AG04449 (cell line): ENCODE measurements at regions of chr6 and their contacts with region 1.

Region 1: DNA sequence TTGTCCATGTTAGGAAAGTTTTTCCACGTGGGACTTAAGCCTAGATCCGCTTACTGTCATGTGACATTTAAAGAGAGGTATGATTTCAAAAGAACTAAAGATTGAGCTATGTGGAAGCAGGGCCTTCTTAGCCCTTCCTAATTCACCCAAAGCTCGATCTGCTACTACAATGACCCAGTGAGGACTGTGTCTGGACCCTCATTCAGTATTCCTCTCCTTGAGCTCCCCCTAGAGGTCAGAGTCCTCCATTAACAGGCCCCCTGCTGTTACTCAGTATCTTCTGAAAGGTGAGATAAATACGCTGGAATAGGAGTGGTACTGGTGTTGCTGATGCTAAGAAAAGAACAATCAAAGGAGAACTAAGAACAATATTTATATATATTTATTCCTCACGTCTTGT is 414.0 kb downstream of the GJA1 start:
- DNase-seq: no peak
- H3K4me3 ChIP-seq: no peak overlapping the region
- CTCF ChIP-seq: peak; percentile 77

Region 2: DNA sequence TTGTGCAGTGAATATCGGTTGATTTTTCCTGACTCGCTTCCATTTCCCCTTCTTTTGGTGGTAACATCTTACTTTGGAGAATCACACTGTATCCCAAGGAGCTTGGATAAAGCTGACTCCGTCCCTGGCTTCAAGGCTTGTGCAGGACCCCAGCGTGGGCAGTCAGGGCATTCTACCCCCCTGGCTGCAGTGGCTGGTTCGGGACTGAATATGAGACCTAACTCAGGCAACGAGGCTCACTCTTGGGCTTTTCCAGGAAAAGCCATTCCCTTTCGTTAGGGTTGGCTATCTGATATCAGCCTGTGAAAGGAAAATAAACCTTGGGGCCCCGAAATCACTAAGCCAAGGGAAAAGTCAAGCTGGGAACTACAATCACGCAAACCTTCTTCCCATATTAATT is 444.2 kb before region 1 on chr6:
- CTCF ChIA-PET with region 1: no interaction called
- POLR2A ChIA-PET with region 1: no interaction called
- DNase-seq: no peak
- H3K4me3 ChIP-seq: no peak overlapping the region
- CTCF ChIP-seq: no peak

Region 3: DNA sequence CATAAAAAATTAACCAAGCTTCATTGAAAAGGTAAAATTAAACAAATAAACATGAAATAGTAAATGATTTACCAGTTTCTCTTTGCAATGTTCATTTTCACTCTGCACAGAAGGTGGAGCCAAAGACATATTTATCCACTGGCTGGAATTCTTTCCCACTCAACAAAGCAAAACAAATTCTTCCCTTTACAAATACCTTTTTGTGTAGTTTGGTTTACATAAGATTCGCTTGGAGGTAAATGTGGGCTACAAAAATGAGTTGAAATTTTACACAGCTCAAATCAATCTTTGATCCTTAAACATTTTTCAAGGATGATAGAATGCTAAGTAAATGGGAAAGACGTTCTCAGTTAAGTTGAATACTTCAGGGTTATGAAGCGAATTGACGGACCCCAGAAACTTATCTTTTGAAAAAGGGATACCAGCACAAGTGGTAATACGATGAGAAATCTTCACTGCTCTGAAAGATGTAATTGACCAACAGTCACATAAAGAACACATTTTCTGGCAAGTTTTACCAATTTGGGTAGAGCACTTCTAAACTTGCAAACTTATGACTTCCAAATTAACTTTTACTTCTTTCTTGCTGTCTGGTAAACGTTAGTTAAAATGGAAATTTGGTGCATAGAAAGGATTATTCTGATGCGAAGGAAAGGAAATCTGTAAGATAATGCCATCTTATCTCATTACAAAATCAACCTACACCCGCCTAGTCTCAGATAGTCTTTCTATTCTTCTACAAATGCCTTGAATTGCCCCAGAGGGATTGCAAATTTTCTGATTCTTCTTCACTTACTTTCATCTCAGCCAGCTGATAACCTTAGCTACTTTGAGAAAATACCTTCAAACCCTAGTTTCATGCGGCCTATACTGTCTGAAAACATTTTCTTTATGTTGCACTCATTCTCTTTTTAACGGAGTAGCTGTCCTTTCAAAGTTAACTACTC is 418.7 kb before region 1 on chr6:
- CTCF ChIA-PET with region 1: interaction called, 77 read pairs
- POLR2A ChIA-PET with region 1: no interaction called
- DNase-seq: no peak
- H3K4me3 ChIP-seq: no peak overlapping the region
- CTCF ChIP-seq: peak; percentile 54

Region 4: GRCh38 chr6:121436960-121437850 is 412.3 kb before region 1 on chr6:
- CTCF ChIA-PET with region 1: interaction called, 77 read pairs
- POLR2A ChIA-PET with region 1: interaction called, 3 read pairs
- DNase-seq: no peak
- H3K4me3 ChIP-seq: peak overlapping the region; percentile 87
- CTCF ChIP-seq: no peak

Region 5: DNA sequence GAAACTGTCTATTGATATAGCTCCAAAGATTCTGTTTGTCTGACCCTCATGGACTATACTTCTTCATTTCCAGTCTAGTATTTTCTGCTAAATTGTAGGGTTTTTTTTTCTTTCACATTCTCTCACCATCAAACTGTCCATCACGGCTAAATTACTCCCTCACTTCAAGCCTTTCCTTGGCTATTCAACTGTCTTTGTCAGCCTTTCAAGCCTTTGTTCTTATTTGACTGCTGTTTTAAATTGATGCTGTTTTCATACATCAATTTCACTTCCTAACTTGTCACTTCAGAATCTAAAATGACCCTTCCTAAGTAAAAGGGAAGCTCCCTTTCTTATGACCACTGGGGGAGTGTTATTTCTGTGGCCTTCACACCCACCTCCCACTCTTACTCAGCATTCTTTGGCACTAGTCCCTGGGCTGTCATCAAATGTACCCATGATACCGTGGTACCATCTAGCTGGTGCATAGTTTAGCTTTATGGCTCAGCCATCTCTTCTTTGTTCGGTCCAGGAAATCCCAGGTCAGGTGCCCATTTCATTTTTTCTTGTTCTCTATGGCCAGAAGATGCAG is 405.4 kb before region 1 on chr6:
- CTCF ChIA-PET with region 1: interaction called, 71 read pairs
- POLR2A ChIA-PET with region 1: no interaction called
- DNase-seq: no peak
- H3K4me3 ChIP-seq: no peak overlapping the region
- CTCF ChIP-seq: no peak

Region 6: DNA sequence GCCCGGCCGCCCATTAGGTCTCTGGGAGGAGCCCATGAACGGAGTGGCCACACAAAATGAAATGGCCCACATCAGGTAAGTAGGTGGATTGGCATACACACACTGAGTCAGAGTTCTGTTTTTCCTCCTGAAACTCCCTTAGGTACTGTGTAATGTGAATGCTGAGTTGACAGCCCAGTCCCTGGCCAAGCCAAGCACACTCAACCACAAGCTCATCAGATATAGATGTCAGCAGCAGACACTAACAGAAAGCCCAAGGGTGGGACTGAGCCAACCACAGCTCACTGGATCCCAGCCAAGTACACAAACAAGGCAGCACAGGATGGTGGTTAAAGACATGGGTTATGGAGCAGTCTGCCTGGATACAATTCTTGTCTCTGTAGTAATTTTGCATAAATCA is 10.6 kb before region 1 on chr6:
- CTCF ChIA-PET with region 1: interaction called, 44 read pairs
- POLR2A ChIA-PET with region 1: no interaction called
- DNase-seq: no peak
- H3K4me3 ChIP-seq: no peak overlapping the region
- CTCF ChIP-seq: no peak

Region 7: GRCh38 chr6:121977556-121977955 is 128.1 kb after region 1 on chr6:
- CTCF ChIA-PET with region 1: no interaction called
- POLR2A ChIA-PET with region 1: no interaction called
- DNase-seq: no peak
- H3K4me3 ChIP-seq: no peak overlapping the region
- CTCF ChIP-seq: no peak

Region 8: DNA sequence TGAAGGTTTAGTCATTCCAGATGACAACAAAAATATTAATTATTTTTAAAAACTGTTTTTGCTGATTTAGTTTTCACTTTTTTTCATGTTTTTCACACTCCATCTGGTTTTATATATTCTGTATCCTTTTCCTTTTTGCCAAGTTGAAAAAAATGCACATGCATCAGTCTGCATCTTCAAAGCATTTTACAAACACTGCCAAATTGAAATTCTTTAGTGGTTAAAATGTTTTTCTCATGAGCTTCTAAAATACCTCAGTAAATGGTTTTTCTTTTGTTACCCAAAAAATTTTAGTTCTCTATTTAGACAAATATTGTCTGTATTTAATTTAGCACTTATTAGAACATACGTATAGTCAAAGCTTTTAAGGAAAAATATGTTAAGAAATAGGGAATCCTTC is 163.1 kb after region 1 on chr6:
- CTCF ChIA-PET with region 1: no interaction called
- POLR2A ChIA-PET with region 1: no interaction called
- DNase-seq: no peak
- H3K4me3 ChIP-seq: no peak overlapping the region
- CTCF ChIP-seq: no peak

Region 9: DNA sequence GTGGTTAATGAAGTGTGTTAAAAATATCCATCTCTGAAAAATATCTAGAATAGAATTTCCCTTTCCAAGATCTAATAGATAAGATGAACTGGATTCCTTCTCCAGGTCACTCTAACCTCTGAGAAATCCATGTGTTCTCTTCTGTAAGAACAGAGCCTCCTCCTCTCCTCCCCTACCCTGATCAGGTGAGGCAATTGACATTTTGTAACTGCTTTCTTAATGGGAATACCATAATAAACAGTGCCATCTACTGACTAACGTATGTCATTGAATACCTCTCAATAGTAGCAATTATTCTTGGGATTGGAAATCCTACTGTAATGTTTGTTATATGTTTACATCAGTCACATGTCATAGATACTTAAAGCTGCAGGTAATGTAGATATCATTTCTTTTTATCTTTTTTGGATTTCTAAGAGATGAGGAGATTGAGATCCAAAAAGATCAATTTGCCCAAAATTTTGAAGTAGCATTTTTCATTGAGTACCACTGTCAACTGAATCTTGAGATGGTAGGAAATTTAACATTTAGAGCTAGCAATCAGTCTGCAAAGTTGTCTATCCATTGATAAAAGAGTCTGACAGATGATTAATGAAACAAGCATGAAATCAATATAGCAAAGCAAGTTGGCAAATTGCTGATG is 184.2 kb after region 1 on chr6:
- CTCF ChIA-PET with region 1: interaction called, 42 read pairs
- POLR2A ChIA-PET with region 1: no interaction called
- DNase-seq: no peak
- H3K4me3 ChIP-seq: no peak overlapping the region
- CTCF ChIP-seq: peak; percentile 43